ENCODE measurements at regions of chr9 and their contacts with region 1.

Region 1: DNA sequence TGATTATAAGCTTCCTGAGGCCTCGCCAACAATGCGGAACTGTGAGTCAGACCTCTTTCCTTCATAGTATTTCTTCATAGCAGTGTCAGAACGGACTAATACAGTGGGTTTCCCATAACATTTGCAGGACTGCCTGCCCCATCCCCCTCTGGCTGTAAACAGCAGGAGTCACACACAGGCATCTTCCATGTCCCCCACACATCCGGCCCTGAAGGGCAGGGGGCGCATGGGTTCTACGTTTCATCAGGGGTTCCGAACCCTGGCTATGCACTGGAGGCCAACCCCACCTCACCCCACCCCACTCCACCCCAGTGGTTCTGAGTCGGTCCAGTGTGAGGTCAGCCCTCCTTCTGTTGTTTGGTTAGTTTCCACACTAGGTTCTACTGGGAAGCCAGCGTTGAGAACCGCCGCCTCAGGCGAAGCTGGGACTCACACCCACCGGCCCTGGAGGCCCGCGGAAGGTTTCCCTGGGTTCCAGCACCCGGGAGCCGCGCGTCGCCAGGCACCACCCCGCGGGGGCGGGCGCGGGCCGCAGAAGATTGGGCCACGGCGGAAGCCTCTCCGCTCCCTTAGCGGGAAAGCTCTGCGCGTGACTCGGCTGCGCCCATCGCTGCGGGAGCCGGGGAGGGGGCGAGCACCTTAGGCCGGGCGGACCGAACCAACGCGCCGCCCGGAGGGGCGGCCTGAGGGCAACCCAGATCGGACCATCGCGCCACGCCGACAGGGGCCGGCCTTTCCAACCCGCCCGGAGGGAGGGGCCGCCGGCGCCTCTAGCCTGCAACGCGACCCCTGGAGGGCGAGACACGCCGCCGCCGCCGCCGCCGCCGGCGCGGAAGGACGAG is at the start of gene RUSC2:
- DNase-seq: peak; percentile 75
- ATAC-seq: peak; percentile 84
- H3K4me3 ChIP-seq: peak within 1 kb of the TSS; percentile 76 to 97 (median 87)
- H3K27ac ChIP-seq: peak within 1 kb of the TSS; percentile 71
- H3K4me1 ChIP-seq: peaks cover 30% of the 10 kb centered on the region
- H3K27me3 ChIP-seq: no peaks in the 10 kb centered on the region
- CTCF ChIP-seq: peak; percentile 77
- EP300 ChIP-seq: peak; percentile 3 to 26; a peak in 1 of 4 replicates
- POLR2A ChIP-seq: peak; percentile 61 to 71
- RAD21 ChIP-seq: peak; percentile 46; the same call in 1 of the 2 replicates
- total RNA-seq, gene RUSC2: 2.3 and 3.3 TPM in 2 replicates

Region 2: GRCh38 chr9:34279411-34279810 is 1210.1 kb before region 1 on chr9:
- CTCF ChIA-PET with region 1: no interaction called
- POLR2A ChIA-PET with region 1: no interaction called
- in situ Hi-C with region 1: no loop called
- intact Hi-C with region 1: no loop called
- DNase-seq: no peak
- ATAC-seq: no peak
- H3K4me3 ChIP-seq: no peak overlapping the region
- H3K27ac ChIP-seq: no peak overlapping the region
- H3K4me1 ChIP-seq: 0 out of 2 replicates have a peak, but pooled peaks cover 6% of the 10 kb centered on the region
- H3K27me3 ChIP-seq: no peaks in the 10 kb centered on the region
- CTCF ChIP-seq: no peak
- EP300 ChIP-seq: no peak
- POLR2A ChIP-seq: no peak
- RAD21 ChIP-seq: no peak

Region 3: GRCh38 chr9:35313916-35314315 is 175.6 kb before region 1 on chr9:
- CTCF ChIA-PET with region 1: no interaction called
- POLR2A ChIA-PET with region 1: no interaction called
- in situ Hi-C with region 1: no loop called
- intact Hi-C with region 1: no loop called
- DNase-seq: no peak
- ATAC-seq: no peak
- H3K4me3 ChIP-seq: no peak overlapping the region
- H3K27ac ChIP-seq: no peak overlapping the region
- H3K4me1 ChIP-seq: peaks cover 8% of the 10 kb centered on the region
- H3K27me3 ChIP-seq: no peaks in the 10 kb centered on the region
- CTCF ChIP-seq: no peak
- EP300 ChIP-seq: no peak
- POLR2A ChIP-seq: no peak
- RAD21 ChIP-seq: no peak

Region 4: DNA sequence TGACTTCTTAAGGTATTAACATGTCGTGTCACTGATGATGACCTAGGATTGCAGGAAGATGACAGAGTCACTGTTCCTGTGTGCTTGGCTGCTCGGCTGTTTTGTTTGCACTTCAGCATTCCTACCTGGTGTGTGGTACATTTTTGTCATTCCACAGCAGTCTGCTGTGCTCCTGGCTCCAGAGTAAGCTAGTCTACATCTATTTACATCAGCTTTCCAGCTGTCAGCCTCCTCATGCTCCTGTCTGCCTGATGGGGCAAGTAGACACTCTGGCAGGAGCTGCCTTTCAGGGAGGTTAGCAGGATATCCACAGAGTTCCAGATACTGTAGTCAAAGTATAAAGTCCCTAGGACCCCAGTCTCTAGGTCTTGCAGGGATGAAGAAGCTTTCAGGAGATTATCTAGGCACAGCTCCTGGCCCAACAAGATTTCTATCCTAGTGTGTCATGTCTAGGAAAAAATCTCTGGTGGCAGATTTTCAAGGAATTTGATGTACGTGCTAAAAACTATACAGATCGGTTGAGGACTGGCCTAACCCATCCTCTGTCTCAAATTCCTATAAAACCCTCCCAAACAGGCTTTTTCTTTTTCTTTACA is 28.8 kb after region 1 on chr9:
- CTCF ChIA-PET with region 1: interaction called, 3 read pairs
- POLR2A ChIA-PET with region 1: interaction called, 15 read pairs
- in situ Hi-C with region 1: no loop called
- intact Hi-C with region 1: loop called (anchors 1 kb)
- DNase-seq: peak; percentile 96
- ATAC-seq: peak; percentile 99
- H3K4me3 ChIP-seq: no peak overlapping the region; a peak in 1 of 6 replicates
- H3K27ac ChIP-seq: peak overlapping the region; percentile 66
- H3K4me1 ChIP-seq: peaks cover 66% of the 10 kb centered on the region
- H3K27me3 ChIP-seq: no peaks in the 10 kb centered on the region
- CTCF ChIP-seq: no peak; the same call in 1 of the 2 replicates
- EP300 ChIP-seq: peak; percentile 11 to 71; a peak in 2 of 4 replicates
- POLR2A ChIP-seq: 0 out of 4 replicates have a peak, but pooled peaks of 1 of the 2 experiments have one; percentile 3
- RAD21 ChIP-seq: no peak

Measured in HepG2 (cell line).